Activated CD4-positive, alpha-beta T cell treated with anti-CD3 and anti-CD28 coated beads for 36 hours (primary cell): ENCODE measurements at regions of chr11 and their contacts with region 1.

Region 1: DNA sequence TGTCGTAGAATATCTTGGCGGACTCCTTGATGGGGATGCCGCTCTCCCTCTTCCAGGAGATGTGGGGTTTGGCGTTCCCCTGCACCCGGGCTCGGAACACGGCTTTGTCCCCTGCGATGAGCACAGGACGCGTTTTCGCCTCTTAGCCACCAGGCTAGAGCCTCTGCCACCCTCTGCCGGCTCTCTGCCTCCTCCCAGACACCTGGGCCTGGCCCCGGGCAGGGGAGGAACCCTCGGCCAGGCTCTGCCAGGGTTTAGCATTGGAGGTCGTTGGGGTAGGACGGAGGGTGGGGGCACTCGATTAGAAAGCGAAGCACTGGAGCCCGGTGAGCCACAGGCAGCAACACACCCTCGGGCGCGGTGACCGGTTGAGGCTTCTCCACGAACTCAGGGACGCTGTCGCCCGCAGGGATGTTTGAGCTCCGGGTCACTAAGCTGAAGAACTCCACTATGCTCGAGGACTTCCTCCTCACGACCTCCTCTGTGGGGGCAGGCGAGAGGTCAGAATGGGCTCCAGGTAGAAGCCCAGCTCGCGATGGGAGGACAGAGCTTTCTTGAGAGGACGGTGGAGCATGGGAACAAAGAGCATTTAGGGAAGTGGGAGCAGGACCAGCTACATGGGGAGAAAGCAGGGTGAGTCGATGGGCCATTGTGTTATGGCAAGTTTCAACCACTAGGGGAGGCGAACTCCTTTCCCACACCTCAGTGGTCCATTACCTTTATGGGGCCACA is 4.3 kb downstream of the IGSF22 start:
- DNase-seq: peak; percentile 72
- ATAC-seq: peak; percentile 68
- H3K4me3 Mint-ChIP-seq: peak overlapping the region; percentile 78
- H3K27ac Mint-ChIP-seq: no peak overlapping the region
- H3K4me1 Mint-ChIP-seq: peaks cover 5% of the 10 kb centered on the region
- H3K27me3 Mint-ChIP-seq: no peaks in the 10 kb centered on the region

Region 2: GRCh38 chr11:18012863-18013781 is 708.6 kb before region 1 on chr11 and contains the start of gene SERGEF:
- CTCF ChIA-PET with region 1: no interaction called
- POLR2A ChIA-PET with region 1: no interaction called
- intact Hi-C with region 1: loop called in 1 of 2 experiments (anchors 5 kb)
- DNase-seq: peak; percentile 96
- ATAC-seq: peak; percentile 93
- H3K4me3 Mint-ChIP-seq: peak within 1 kb of the TSS; percentile 85
- H3K27ac Mint-ChIP-seq: peak within 1 kb of the TSS; percentile 98
- H3K4me1 Mint-ChIP-seq: peaks cover 39% of the 10 kb centered on the region
- H3K27me3 Mint-ChIP-seq: no peaks in the 10 kb centered on the region
- total RNA-seq, gene SERGEF: 47.5 to 57.5 TPM

Region 3: DNA sequence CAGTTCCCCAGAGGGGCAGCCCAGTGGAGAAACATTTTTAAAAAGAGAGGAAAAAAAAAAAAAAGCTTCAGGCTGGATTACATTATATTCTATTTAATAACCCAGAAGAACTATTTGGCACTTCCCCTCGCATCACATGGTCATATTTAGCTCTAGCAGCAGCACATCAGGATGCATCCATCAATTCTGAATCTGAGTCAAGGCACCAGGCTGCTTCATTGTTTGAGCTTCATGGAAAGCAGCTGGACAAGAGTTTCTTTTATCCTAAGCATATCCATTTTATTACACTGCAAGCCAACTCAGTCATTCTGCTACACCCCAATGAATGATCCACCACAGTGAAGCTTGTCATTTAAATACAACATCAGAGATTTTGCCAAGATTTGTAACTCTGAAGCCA is 97.6 kb before region 1 on chr11:
- CTCF ChIA-PET with region 1: interaction called, 5 read pairs
- POLR2A ChIA-PET with region 1: interaction called, 10 read pairs
- intact Hi-C with region 1: no loop called
- DNase-seq: no peak
- ATAC-seq: no peak
- H3K4me3 Mint-ChIP-seq: no peak overlapping the region
- H3K27ac Mint-ChIP-seq: no peak overlapping the region
- H3K4me1 Mint-ChIP-seq: peaks cover 23% of the 10 kb centered on the region
- H3K27me3 Mint-ChIP-seq: no peaks in the 10 kb centered on the region

Region 4: GRCh38 chr11:18684267-18684666 is 37.5 kb before region 1 on chr11:
- CTCF ChIA-PET with region 1: interaction called, 10 read pairs
- POLR2A ChIA-PET with region 1: no interaction called
- intact Hi-C with region 1: no loop called
- DNase-seq: no peak
- ATAC-seq: no peak
- H3K4me3 Mint-ChIP-seq: no peak overlapping the region
- H3K27ac Mint-ChIP-seq: no peak overlapping the region
- H3K4me1 Mint-ChIP-seq: peaks cover 4% of the 10 kb centered on the region
- H3K27me3 Mint-ChIP-seq: no peaks in the 10 kb centered on the region

Region 5: DNA sequence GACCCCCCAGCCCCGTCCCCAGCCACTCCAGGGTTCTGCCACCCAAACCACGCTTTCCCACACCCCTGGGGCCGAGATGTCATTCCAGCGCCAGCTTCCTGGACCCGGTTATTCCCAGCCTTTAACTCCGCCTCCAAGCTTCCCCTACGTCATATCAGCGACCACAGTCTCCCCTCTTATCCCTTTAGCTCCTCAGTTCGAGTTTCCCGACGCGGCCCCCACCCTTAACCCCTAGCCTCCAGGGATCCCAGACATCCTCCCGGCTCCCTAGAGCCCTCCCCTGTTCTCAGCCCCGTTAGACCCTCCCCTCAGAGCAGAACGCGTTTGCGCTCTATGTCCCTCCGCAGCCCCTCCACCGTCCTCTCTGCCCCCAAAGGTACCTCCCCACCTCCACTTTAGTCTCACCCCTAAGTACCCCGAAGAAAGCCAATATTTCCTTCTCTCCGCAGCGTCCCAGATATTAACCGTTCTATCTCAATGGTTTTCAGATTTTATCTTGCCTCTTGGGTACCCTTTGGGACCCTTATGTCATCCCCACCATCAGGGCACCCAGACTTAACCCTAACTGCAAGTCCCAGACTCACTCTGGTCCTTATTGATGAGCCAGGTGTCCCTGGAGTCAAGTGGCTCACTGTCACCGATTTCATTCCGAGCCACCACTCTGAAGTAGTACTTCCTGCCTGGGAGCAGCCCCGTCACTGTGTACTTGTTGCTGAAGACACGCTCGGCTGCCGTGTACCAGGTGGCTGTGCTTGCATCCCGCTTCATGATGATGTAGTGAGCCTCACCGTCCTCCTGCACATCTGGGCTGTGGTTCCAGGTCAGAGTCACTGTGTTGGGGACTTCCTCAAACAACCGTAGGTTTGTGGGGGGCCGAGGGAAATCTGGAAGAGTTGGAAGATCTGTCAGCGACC is 15.1 kb before region 1 on chr11:
- CTCF ChIA-PET with region 1: interaction called, 55 read pairs
- POLR2A ChIA-PET with region 1: no interaction called
- intact Hi-C with region 1: no loop called
- DNase-seq: peak; percentile 63
- ATAC-seq: peak; percentile 75
- H3K4me3 Mint-ChIP-seq: peak overlapping the region; percentile 54
- H3K27ac Mint-ChIP-seq: peak overlapping the region; percentile 58
- H3K4me1 Mint-ChIP-seq: peaks cover 19% of the 10 kb centered on the region
- H3K27me3 Mint-ChIP-seq: peaks cover 5% of the 10 kb centered on the region

Region 6: DNA sequence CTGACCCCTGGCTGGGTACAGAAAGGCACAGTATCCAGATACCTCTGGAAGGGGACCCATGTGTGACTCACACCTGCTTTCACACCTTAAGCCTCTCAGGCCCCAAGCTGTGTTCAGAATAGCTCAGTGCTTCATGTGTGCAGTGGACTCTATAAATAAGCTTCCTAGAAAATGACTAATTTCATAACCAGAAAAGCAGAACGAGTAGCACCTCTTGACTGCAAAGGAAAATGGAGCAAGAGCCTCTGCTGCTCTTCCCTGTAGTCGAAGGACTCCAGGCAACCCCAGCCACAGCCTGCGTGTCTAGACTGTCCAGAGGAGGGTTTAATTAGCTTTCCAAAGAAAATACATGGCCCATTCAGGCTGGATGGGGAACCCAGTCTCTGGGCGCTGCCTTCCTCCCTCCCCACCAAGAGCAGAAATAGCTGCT is 46.8 kb after region 1 on chr11:
- CTCF ChIA-PET with region 1: interaction called, 26 read pairs
- POLR2A ChIA-PET with region 1: no interaction called
- intact Hi-C with region 1: loop called in 1 of 2 experiments (anchors 1 kb)
- DNase-seq: no peak
- ATAC-seq: peak; percentile 63
- H3K4me3 Mint-ChIP-seq: no peak overlapping the region
- H3K27ac Mint-ChIP-seq: no peak overlapping the region
- H3K4me1 Mint-ChIP-seq: peaks cover 11% of the 10 kb centered on the region
- H3K27me3 Mint-ChIP-seq: peaks cover 19% of the 10 kb centered on the region

Region 7: GRCh38 chr11:18912883-18913282 is 191.2 kb after region 1 on chr11:
- CTCF ChIA-PET with region 1: no interaction called
- POLR2A ChIA-PET with region 1: no interaction called
- intact Hi-C with region 1: no loop called
- DNase-seq: no peak
- ATAC-seq: no peak
- H3K4me3 Mint-ChIP-seq: no peak overlapping the region
- H3K27ac Mint-ChIP-seq: no peak overlapping the region
- H3K4me1 Mint-ChIP-seq: no peaks in the 10 kb centered on the region
- H3K27me3 Mint-ChIP-seq: peaks cover 12% of the 10 kb centered on the region

Region 8: GRCh38 chr11:19410032-19410431 is 688.3 kb after region 1 on chr11:
- CTCF ChIA-PET with region 1: no interaction called
- POLR2A ChIA-PET with region 1: no interaction called
- intact Hi-C with region 1: no loop called
- DNase-seq: no peak
- ATAC-seq: no peak
- H3K4me3 Mint-ChIP-seq: no peak overlapping the region
- H3K27ac Mint-ChIP-seq: no peak overlapping the region
- H3K4me1 Mint-ChIP-seq: no peaks in the 10 kb centered on the region
- H3K27me3 Mint-ChIP-seq: peaks cover 29% of the 10 kb centered on the region